ENCODE measurements at regions of chr10 and their contacts with region 1.

Region 1: GRCh38 chr10:25465582-25466372 is 291.0 kb downstream of the GPR158 start:
- DNase-seq: no peak
- ATAC-seq: no peak
- H3K4me3 ChIP-seq: peak overlapping the region in 1 of 12 donors; percentile 4
- H3K27ac ChIP-seq: no peak overlapping the region
- H3K4me1 ChIP-seq: no peaks in the 10 kb centered on the region
- H3K27me3 ChIP-seq: no peaks in the 10 kb centered on the region
- CTCF ChIP-seq: no peak
- POLR2A ChIP-seq: no peak

Region 2: GRCh38 chr10:25417611-25418010 is 48.2 kb before region 1 on chr10:
- intact Hi-C with region 1: no loop called
- DNase-seq: no peak
- ATAC-seq: no peak
- H3K4me3 ChIP-seq: no peak overlapping the region
- H3K27ac ChIP-seq: no peak overlapping the region
- H3K4me1 ChIP-seq: no peaks in the 10 kb centered on the region
- H3K27me3 ChIP-seq: no peaks in the 10 kb centered on the region
- CTCF ChIP-seq: no peak
- POLR2A ChIP-seq: no peak

Region 3: DNA sequence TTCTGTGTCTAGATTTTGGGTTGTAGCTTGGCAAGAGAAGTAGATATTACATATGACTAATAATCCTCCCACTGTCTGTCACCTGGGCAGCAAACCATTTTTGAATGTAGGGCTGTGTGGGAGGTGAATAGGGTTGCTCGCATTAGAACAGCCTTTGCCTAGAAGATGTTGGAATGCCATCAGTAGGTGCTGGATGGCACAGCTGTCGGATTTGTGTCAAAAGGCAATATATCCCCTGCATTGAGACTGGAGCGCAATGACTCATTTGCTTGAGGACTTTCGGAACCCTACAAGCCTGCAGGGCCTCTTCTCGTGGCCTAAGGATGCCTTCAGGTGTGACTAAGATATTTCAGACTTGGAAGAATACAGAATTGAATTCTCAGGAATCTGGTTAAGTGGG is 32.9 kb after region 1 on chr10:
- intact Hi-C with region 1: loop called in 1 of 10 experiments (anchors 5 kb)
- DNase-seq: no peak
- ATAC-seq: no peak
- H3K4me3 ChIP-seq: no peak overlapping the region
- H3K27ac ChIP-seq: no peak overlapping the region
- H3K4me1 ChIP-seq: peaks cover 0 to 11% (median 0%) of the 10 kb centered on the region in 12 donors
- H3K27me3 ChIP-seq: no peaks in the 10 kb centered on the region
- CTCF ChIP-seq: no peak
- POLR2A ChIP-seq: no peak